K562 (cell line): ENCODE measurements at regions of chr6 and their contacts with region 1.

Region 1: GRCh38 chr6:112337209-112337638 is 9.9 kb upstream of the RFPL4B start:
- DNase-seq: peak in 2 of 4 experiments; percentile 25 to 31
- ATAC-seq: peak; percentile 89
- H3K4me3 ChIP-seq: no peak overlapping the region
- H3K27ac ChIP-seq: no peak overlapping the region
- H3K4me1 ChIP-seq: no peaks in the 10 kb centered on the region
- H3K27me3 ChIP-seq: no peaks in the 10 kb centered on the region; a peak in 1 of 5 replicates
- CTCF ChIP-seq: peak; percentile 55 to 66 (median 65)
- EP300 ChIP-seq: no peak
- POLR2A ChIP-seq: no peak
- RAD21 ChIP-seq: peak; percentile 56 to 71

Region 2: DNA sequence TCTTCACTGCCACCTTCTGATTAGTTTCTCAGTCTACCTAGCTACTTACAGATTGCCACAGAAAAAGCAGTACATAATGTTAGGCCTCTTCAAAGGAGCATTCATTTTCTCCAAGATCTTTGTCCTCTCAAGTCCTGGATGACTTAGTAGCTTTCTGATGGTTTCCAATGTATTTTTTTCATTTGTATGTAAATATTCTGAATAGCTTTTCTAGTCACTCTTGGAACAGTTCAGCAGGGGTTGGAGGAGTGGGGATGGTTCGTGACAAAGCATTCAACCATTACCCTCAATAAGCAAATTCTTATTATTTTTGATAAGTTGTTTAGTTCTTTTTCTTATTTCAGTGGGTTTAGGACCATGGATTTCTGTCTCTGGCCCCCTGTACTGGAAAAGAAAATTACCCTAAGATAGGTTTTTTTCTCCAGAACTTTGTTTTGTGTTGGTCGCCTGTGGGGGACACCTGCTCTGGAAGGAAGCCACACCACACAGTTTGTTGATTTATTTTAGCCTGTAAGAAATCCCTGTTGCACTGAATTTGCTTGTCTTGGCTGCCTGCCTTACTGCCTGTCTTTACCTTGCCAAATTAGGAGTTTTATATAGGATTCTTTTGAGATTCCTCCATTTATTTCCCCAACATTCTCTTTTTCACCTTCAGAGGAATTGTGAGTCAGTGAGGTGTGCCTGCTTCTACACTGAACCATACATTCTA is 257.8 kb after region 1 on chr6:
- CTCF ChIA-PET with region 1: no interaction called
- POLR2A ChIA-PET with region 1: no interaction called
- in situ Hi-C with region 1: no loop called
- intact Hi-C with region 1: loop called (anchors 10 kb)
- DNase-seq: no peak
- ATAC-seq: no peak
- H3K4me3 ChIP-seq: no peak overlapping the region
- H3K27ac ChIP-seq: no peak overlapping the region
- H3K4me1 ChIP-seq: no peaks in the 10 kb centered on the region
- H3K27me3 ChIP-seq: no peaks in the 10 kb centered on the region
- CTCF ChIP-seq: no peak
- EP300 ChIP-seq: no peak
- POLR2A ChIP-seq: no peak
- RAD21 ChIP-seq: no peak

Region 3: DNA sequence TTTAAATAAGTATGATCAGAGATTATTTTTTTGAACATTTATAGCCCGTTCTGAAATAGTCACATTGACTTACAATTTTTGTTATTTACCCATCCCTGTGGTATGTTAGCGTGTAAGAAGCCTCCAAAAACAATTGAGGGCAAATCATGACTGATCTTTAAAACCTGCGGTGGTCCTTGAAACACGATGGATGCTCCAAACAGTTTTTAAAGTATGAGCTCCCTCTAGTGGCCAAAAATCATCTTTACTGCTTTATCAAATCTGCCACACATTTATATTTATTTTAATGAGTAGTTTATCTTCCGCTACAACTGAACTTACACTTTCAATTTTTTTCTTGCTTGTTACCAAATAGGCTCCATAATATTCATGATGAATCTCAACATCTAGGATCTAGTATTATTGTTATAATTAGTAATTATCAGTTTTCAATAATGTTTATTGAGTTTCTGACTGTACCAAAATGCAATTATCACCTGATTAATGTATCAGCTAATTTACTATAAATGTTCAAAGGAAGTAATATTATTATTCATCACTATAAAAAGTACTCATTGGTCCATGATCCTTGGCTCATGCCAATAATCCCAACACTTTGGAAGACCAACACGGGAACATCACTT is 1572.1 kb after region 1 on chr6:
- CTCF ChIA-PET with region 1: no interaction called
- POLR2A ChIA-PET with region 1: no interaction called
- in situ Hi-C with region 1: no loop called
- intact Hi-C with region 1: loop called (anchors 10 kb)
- DNase-seq: peak; percentile 48 to 69 (median 50)
- ATAC-seq: peak; percentile 75
- H3K4me3 ChIP-seq: no peak overlapping the region
- H3K27ac ChIP-seq: no peak overlapping the region
- H3K4me1 ChIP-seq: no peaks in the 10 kb centered on the region
- H3K27me3 ChIP-seq: no peaks in the 10 kb centered on the region
- CTCF ChIP-seq: peak; percentile 45 to 76 (median 48); a peak in 5 of 6 replicates
- EP300 ChIP-seq: no peak
- POLR2A ChIP-seq: no peak
- RAD21 ChIP-seq: peak; percentile 76 to 80